ENCODE measurements at regions of chr16 and their contacts with region 1.

Region 1: DNA sequence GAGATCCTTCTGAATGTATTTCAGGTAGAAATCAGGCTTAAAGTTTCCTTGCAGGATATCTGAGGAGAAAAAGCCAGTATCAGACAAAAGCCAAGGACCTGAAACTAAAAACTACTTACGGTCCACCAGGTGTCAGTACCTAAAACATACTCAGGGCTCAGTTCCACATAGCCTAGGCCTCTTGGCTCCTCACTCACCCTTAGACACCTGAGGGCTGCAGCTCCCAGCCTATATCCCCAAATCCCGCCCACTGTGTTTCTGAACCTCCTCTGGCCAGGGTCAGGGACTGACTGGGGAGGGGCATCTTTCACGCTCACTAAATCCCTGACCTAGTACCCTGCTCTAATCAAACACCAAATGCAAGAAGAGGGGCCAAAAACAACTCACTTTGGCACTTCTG is 8.8 kb upstream of the ROGDI start:
- DNase-seq: no peak
- CTCF ChIP-seq: no peak

Region 2: GRCh38 chr16:4828567-4829321 is 17.5 kb after region 1 on chr16:
- CTCF ChIA-PET with region 1: interaction called, 5 read pairs
- POLR2A ChIA-PET with region 1: interaction called, 11 read pairs
- DNase-seq: no peak
- CTCF ChIP-seq: no peak

Measured in GM10248 (cell line).